Mammary epithelial cell (primary cell): ENCODE measurements at regions of chr7 and their contacts with region 1.

Region 1: GRCh38 chr7:33243319-33243881 is 114.0 kb downstream of the BBS9 start:
- DNase-seq: peak; percentile 27
- H3K4me3 ChIP-seq: no peak overlapping the region
- H3K27ac ChIP-seq: no peak overlapping the region
- H3K4me1 ChIP-seq: no peaks in the 10 kb centered on the region
- H3K27me3 ChIP-seq: no peaks in the 10 kb centered on the region
- CTCF ChIP-seq: peak; percentile 64 to 71

Region 2: DNA sequence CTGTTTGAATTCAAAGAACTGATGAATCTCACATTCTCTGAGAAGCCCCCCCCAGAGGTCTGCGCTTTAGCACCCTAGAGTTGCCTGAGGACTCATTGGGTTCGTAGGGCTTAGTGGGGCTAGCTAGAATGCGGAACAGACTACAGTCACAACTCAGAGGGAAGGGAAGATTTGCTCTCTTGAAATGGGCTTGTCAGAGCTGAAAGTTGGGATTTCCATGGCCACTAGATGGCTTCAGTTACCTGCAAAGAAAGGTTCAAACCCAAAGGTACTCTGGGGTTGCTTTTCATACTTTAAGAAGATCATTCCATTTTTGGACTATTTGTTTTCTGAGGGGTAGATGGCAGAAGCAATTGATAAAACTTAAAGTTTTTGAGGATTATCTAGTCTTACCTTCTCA is 90.9 kb after region 1 on chr7:
- CTCF ChIA-PET with region 1: no interaction called
- dilution Hi-C with region 1: no loop called
- in situ Hi-C with region 1: no loop called
- intact Hi-C with region 1: loop called (anchors 5 kb)
- DNase-seq: peak; percentile 6
- H3K4me3 ChIP-seq: no peak overlapping the region
- H3K27ac ChIP-seq: no peak overlapping the region
- H3K4me1 ChIP-seq: no peaks in the 10 kb centered on the region
- H3K27me3 ChIP-seq: no peaks in the 10 kb centered on the region
- CTCF ChIP-seq: peak; percentile 47 to 66

Region 3: GRCh38 chr7:33418251-33418701 is 174.9 kb after region 1 on chr7:
- CTCF ChIA-PET with region 1: no interaction called
- dilution Hi-C with region 1: no loop called
- in situ Hi-C with region 1: no loop called
- intact Hi-C with region 1: loop called (anchors 10 kb)
- DNase-seq: no peak
- H3K4me3 ChIP-seq: no peak overlapping the region
- H3K27ac ChIP-seq: no peak overlapping the region
- H3K4me1 ChIP-seq: no peaks in the 10 kb centered on the region
- H3K27me3 ChIP-seq: no peaks in the 10 kb centered on the region
- CTCF ChIP-seq: no peak

Region 4: GRCh38 chr7:33459340-33459751 is 215.9 kb after region 1 on chr7:
- CTCF ChIA-PET with region 1: no interaction called
- dilution Hi-C with region 1: no loop called
- in situ Hi-C with region 1: no loop called
- intact Hi-C with region 1: loop called (anchors 1 kb)
- DNase-seq: peak; percentile 37
- H3K4me3 ChIP-seq: no peak overlapping the region
- H3K27ac ChIP-seq: no peak overlapping the region
- H3K4me1 ChIP-seq: no peaks in the 10 kb centered on the region
- H3K27me3 ChIP-seq: peaks cover 5% of the 10 kb centered on the region
- CTCF ChIP-seq: peak; percentile 21 to 60